Caco-2 (cell line): ENCODE measurements at regions of chr7 and their contacts with region 1.

Region 1: DNA sequence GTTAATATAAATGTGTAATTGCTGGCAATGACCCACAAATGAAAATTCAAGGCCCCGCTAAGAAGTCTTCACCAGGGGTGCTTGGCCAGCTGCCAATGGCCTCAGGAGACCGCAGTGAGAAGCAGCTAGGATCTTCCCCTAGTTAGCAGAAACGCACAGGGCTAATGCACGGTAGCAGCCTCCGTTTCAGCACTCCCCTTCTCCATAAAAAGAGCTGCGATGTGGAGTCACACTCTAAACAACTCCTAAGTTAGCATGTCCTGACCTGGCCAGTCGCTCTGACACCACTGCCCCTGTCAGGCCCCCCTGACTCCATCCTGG is 139.0 kb downstream of the SEPTIN14 start:
- DNase-seq: no peak
- H3K4me3 ChIP-seq: no peak overlapping the region
- H3K4me3 Mint-ChIP-seq: no peak overlapping the region
- H3K27ac Mint-ChIP-seq: no peak overlapping the region
- H3K4me1 ChIP-seq: no peaks in the 10 kb centered on the region
- H3K4me1 Mint-ChIP-seq: no peaks in the 10 kb centered on the region
- H3K27me3 ChIP-seq: no peaks in the 10 kb centered on the region
- H3K27me3 Mint-ChIP-seq: no peaks in the 10 kb centered on the region
- CTCF ChIP-seq: no peak

Region 2: DNA sequence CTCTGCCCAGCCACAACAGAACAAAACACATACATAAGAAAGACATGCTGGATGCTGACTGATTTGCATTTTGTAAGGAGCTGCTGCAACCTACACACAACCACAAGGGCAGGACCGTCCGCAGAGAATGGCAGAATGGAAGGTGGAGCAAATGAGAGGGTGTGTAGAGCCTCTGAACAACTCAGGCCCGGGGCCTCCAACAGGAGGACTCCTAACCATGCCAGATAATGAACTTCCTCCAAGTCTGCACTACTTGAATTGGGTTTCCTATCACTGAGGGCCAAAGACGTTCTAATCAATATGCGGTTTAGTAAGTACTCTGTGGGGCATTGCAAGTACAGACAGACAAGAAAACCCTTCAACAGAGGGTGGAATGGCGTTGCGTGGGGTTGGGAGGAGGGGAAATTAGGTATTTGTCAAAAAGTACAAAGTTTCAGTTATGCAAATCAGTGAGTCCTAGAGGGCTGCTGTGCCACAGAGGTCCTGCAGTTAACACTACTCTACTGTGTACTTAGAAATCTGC is 165.9 kb before region 1 on chr7:
- CTCF ChIA-PET with region 1: no interaction called
- POLR2A ChIA-PET with region 1: no interaction called
- intact Hi-C with region 1: no loop called
- DNase-seq: no peak
- H3K4me3 ChIP-seq: no peak overlapping the region
- H3K4me3 Mint-ChIP-seq: no peak overlapping the region
- H3K27ac Mint-ChIP-seq: no peak overlapping the region
- H3K4me1 ChIP-seq: no peaks in the 10 kb centered on the region
- H3K4me1 Mint-ChIP-seq: no peaks in the 10 kb centered on the region
- H3K27me3 ChIP-seq: no peaks in the 10 kb centered on the region
- H3K27me3 Mint-ChIP-seq: no peaks in the 10 kb centered on the region
- CTCF ChIP-seq: no peak

Region 3: DNA sequence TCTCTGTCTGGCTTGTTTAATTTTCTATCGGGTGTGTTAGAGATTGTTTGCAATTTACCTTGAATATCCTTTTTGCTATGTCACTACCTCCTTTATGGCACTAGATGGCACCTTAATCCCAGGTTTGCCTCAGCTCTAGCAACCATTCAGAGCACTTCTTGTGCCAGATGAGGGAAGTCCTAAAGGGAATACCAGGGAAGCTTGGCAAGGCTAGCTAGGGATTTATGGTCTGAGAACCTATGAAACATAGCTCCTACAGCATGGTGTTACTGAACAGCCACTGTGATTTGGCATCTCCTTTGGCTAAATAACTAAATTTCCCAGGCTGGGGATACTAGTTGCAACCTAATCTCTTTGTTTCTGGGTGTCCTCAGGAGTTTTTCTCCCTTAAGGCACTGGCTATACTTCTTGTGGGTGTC is 82.3 kb before region 1 on chr7:
- CTCF ChIA-PET with region 1: no interaction called
- POLR2A ChIA-PET with region 1: no interaction called
- intact Hi-C with region 1: loop called (anchors 2 kb)
- DNase-seq: peak; percentile 54 to 59
- H3K4me3 ChIP-seq: no peak overlapping the region
- H3K4me3 Mint-ChIP-seq: no peak overlapping the region
- H3K27ac Mint-ChIP-seq: no peak overlapping the region
- H3K4me1 ChIP-seq: no peaks in the 10 kb centered on the region
- H3K4me1 Mint-ChIP-seq: no peaks in the 10 kb centered on the region
- H3K27me3 ChIP-seq: no peaks in the 10 kb centered on the region
- H3K27me3 Mint-ChIP-seq: peaks cover 3% of the 10 kb centered on the region
- CTCF ChIP-seq: peak; percentile 70 to 81